Ovary (tissue), 10 donors: ENCODE measurements at regions of chr12 and their contacts with region 1.

Region 1: DNA sequence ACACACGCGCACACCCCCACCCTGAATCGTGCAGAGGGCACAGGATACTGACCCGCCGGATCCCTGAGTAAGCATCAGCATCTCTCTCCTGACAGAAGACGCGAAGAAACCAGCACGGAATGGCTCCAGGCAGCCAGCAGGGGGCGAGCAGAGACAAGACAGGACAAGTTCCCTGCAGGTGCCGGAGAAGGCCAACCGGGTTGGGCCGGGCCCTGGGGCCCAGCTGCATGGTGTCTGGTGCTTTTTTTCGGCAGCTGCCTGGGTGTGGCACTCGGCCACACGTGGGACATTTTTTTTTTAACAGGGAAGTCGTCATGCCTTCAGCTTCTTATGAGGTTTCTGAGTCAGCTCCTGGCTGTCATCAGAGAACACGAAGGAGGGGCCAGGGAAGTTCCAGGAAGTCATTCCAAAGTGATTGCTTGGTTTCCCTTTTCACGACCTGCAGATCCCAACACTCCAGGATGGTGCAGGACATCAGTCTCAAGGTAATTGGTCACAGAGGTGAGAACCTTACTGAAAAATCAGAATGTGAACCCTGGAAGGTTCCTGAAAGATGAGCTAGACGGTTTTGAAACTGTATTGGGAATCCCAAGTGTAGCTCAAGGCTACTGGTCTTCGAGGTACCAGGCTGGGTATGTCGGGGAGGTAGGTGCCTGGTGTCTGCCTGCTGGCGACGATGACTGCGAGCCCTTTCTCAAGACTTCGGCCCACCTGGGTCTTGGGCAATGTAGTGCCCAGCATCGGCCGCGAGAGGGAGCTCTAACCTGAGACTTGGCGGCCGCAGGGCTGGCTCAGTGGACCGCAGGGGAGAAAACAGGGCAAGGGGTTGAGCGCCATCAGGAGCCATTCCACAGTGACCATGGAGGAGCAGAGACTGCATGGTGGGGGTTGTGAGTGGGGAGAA is 190.8 kb upstream of the PRMT8 start:
- DNase-seq: peak; percentile 81 to 89 (median 85)
- H3K4me3 ChIP-seq: no peak overlapping the region
- H3K27ac ChIP-seq: no peak overlapping the region
- H3K4me1 ChIP-seq: no peaks in the 10 kb centered on the region
- H3K27me3 ChIP-seq: no peaks in the 10 kb centered on the region
- CTCF ChIP-seq: peak; percentile 70 to 86 (median 85)
- EP300 ChIP-seq: no peak
- POLR2A ChIP-seq: no peak

Region 2: GRCh38 chr12:3542883-3543282 is 242.7 kb after region 1 on chr12:
- intact Hi-C with region 1: no loop called
- DNase-seq: no peak
- H3K4me3 ChIP-seq: no peak overlapping the region
- H3K27ac ChIP-seq: no peak overlapping the region
- H3K4me1 ChIP-seq: no peaks in the 10 kb centered on the region
- H3K27me3 ChIP-seq: no peaks in the 10 kb centered on the region
- CTCF ChIP-seq: no peak
- EP300 ChIP-seq: no peak
- POLR2A ChIP-seq: no peak

Region 3: GRCh38 chr12:3641428-3642018 is 341.3 kb after region 1 on chr12:
- intact Hi-C with region 1: loop called in 3 of 4 experiments (anchors 2 to 10 kb)
- DNase-seq: no peak
- H3K4me3 ChIP-seq: no peak overlapping the region
- H3K27ac ChIP-seq: no peak overlapping the region
- H3K4me1 ChIP-seq: no peaks in the 10 kb centered on the region
- H3K27me3 ChIP-seq: no peaks in the 10 kb centered on the region
- CTCF ChIP-seq: no peak
- EP300 ChIP-seq: no peak
- POLR2A ChIP-seq: no peak

Region 4: GRCh38 chr12:3646561-3647241 is 346.5 kb after region 1 on chr12:
- intact Hi-C with region 1: loop called in 3 of 4 experiments (anchors 2 to 10 kb)
- DNase-seq: no peak
- H3K4me3 ChIP-seq: no peak overlapping the region
- H3K27ac ChIP-seq: no peak overlapping the region
- H3K4me1 ChIP-seq: peaks cover 2% of the 10 kb centered on the region
- H3K27me3 ChIP-seq: no peaks in the 10 kb centered on the region
- CTCF ChIP-seq: no peak
- EP300 ChIP-seq: no peak
- POLR2A ChIP-seq: no peak

Region 5: DNA sequence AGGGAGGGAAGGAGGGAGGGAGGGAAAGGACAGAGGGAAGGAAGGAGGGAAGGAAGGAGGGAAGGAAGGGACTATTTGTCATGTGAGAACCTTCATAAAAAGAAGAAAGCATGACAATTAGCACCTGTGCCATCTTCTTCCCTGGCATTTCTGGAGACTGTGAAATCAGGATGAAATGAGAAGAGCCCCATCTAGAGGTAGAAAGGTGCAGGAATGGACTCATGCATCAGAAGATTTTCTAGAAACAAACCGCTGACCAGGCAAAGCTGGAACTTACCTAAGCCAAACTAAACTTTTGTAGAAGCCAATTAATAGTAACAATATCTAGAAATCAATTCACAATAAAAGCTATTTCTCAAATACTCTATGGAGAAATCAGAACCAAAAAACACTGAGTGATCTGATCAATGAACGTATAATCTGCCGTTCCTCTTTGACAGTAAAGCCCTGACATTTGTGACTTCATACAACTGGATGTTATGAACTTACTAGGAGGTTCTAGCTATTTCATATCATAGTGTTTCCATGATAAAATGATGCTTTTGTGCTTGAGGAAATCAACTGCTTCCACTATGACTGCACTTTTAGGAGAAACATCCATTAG is 477.1 kb after region 1 on chr12:
- intact Hi-C with region 1: loop called in 3 of 4 experiments (anchors 5 to 10 kb)
- DNase-seq: no peak
- H3K4me3 ChIP-seq: no peak overlapping the region
- H3K27ac ChIP-seq: no peak overlapping the region
- H3K4me1 ChIP-seq: no peaks in the 10 kb centered on the region
- H3K27me3 ChIP-seq: no peaks in the 10 kb centered on the region
- CTCF ChIP-seq: peak in 1 of 3 donors; percentile 41
- EP300 ChIP-seq: no peak
- POLR2A ChIP-seq: no peak

Region 6: GRCh38 chr12:3803865-3804472 is 503.8 kb after region 1 on chr12:
- intact Hi-C with region 1: loop called (anchors 1 to 10 kb)
- DNase-seq: peak; percentile 70 to 83 (median 79)
- H3K4me3 ChIP-seq: no peak overlapping the region
- H3K27ac ChIP-seq: no peak overlapping the region
- H3K4me1 ChIP-seq: peaks cover 3% of the 10 kb centered on the region
- H3K27me3 ChIP-seq: no peaks in the 10 kb centered on the region
- CTCF ChIP-seq: peak; percentile 56 to 74 (median 62)
- EP300 ChIP-seq: no peak
- POLR2A ChIP-seq: no peak

Region 7: GRCh38 chr12:4030929-4031702 is 730.9 kb after region 1 on chr12:
- intact Hi-C with region 1: loop called in 1 of 4 experiments (anchors 10 kb)
- DNase-seq: peak; percentile 77 to 90 (median 86)
- H3K4me3 ChIP-seq: peak overlapping the region; percentile 57
- H3K27ac ChIP-seq: peak overlapping the region; percentile 23 to 33
- H3K4me1 ChIP-seq: peaks cover 7% of the 10 kb centered on the region
- H3K27me3 ChIP-seq: no peaks in the 10 kb centered on the region
- CTCF ChIP-seq: peak in 1 of 3 donors; percentile 18
- EP300 ChIP-seq: no peak
- POLR2A ChIP-seq: no peak

Region 8: DNA sequence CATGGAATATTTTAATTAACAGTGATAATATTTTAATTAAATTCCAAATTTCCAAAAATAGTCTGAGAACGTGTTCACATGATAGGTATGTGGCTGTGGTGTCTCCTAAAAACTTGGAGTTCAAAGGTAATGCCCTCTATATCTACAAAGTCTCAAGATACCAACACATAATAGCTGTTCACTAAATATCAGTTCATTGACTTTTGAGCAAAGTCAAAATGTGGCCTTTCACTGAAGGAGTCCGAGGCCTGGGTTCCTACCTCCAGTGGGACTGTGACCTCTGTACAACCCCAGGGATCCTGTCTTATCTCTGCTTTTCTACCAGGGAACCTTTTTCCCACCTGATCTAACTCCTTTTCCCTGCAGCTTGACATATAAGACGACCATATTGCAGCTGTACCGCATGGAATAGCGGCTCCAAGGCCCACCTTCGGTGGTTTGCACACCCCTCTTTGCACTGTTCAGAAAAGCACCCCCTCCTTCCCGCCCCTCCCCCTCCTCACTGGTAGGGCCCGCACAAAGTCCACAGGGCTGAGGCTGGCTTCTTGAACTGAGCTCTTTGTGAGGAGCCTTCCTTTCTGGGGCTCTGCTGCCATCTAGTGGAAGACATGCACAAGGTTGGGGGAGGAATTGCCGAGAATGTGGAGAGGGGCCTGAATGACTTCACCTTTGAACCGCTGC is 976.5 kb after region 1 on chr12:
- intact Hi-C with region 1: loop called in 1 of 4 experiments (anchors 10 kb)
- DNase-seq: peak; percentile 78 to 86 (median 79)
- H3K4me3 ChIP-seq: peak overlapping the region; percentile 79
- H3K27ac ChIP-seq: no peak overlapping the region
- H3K4me1 ChIP-seq: peaks cover 12% of the 10 kb centered on the region
- H3K27me3 ChIP-seq: no peaks in the 10 kb centered on the region
- CTCF ChIP-seq: peak; percentile 47 to 83 (median 73)
- EP300 ChIP-seq: no peak
- POLR2A ChIP-seq: no peak